Activated CD4-positive, alpha-beta memory T cell treated with anti-CD3 and anti-CD28 coated beads, Interleukin-2, amount 10 ng/mL, durations not matched to agents 7 days and 5 days (primary cell): ENCODE measurements at regions of chr1 and their contacts with region 1.

Region 1: DNA sequence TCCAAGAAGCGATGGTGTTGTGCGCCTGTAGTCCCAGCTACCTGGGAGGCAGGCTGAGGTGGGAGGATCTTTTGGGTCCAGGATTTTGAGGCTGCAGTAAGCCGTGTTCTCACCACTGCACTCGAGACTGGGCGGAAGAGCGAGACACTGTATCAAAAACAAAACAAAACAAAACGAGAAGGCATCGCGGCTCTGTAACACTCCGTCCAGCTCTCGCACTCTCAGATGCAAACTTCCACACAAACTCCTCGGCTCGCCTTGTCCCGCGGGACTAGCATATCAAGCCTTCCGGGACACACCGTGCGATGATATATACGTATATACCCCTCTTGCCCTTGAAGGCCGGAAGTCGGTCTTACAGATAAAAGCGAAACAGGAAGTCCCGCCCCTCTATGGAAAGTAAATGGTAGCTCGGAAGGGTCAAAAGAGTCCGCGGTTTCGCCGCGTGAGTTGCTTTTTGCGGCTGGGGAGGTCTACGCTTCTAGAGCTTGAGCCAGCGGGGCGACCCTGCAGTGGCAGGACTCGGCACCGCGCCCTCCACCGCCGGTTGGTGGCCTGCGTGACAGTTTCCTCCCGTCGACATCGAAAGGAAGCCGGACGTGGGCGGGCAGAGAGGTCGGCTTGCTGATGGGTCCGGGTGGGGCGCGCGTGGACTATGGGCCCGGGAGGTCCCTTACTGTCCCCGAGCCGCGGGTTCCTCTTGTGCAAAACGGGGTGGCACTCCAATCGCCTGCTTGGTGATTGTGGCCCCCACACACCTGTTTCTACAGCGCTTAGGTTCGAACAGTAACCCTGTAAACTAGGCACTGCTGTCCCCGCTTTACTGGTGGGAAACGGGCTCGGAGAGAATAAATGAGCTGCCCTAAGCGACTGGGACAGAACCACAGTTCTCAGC is at the start of gene COA6:
- DNase-seq: peak; percentile 89
- H3K4me3 Mint-ChIP-seq: peak within 1 kb of the TSS; percentile 96
- H3K27ac Mint-ChIP-seq: peak within 1 kb of the TSS; percentile 91
- H3K4me1 Mint-ChIP-seq: peaks cover 61% of the 10 kb centered on the region
- H3K27me3 Mint-ChIP-seq: no peaks in the 10 kb centered on the region
- total RNA-seq, gene COA6: 39.7 to 44.7 TPM

Region 2: DNA sequence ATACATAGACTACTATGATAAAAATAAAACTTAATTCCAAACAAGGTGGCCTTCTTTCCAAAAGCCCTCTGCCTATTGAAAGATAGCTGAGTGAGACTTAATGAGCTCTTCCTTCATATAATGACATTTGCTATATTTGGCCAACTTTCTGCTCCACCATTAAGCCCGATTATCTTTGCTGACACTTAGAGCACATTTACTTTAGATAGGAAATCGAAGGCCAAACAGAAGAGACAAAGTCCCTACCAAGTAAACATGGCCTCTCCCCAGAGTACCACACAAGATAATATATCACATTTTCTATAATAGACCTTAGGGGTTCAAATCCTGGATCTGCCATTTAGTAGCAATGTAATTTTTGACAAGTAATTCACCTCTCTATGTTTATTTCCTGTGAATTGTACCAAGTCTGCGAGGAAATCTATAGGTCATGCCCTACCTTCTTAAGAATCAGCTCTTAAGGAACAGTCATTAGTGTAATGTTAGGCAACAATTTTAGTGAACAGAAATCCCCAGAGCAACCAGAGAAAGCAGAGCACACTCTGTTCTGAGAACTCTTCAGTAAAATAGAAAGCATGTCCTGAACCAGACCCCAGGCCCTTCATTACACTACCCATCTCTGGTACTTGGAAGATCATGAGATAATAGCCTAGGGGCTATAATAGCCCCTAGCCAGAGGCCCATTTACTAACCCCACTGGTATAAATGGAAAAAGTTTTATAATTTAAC is 17.4 kb before region 1 on chr1:
- CTCF ChIA-PET with region 1: interaction called, 4 read pairs
- POLR2A ChIA-PET with region 1: interaction called, 34 read pairs
- DNase-seq: no peak
- H3K4me3 Mint-ChIP-seq: peak overlapping the region; percentile 81
- H3K27ac Mint-ChIP-seq: peak overlapping the region; percentile 70
- H3K4me1 Mint-ChIP-seq: peaks cover 19% of the 10 kb centered on the region
- H3K27me3 Mint-ChIP-seq: peaks cover 12% of the 10 kb centered on the region

Region 3: DNA sequence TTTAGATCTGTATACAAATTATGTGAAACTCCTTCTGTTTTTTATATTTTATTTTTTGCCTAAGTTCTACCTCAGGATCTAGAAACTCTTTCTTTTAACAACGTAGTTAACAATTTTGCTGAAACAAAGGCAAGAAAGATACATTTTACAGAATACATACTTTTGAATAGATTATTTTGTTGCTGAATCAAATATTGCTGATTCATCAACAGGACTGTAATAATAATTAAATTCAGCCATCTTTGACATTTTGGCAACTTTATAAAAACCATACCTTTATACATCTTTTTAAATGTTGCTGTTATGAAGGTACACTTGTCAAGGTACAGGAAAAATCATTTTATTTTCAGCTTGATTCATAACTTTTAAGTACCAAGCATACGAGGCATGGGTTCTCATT is 10.8 kb before region 1 on chr1:
- CTCF ChIA-PET with region 1: interaction called, 4 read pairs
- POLR2A ChIA-PET with region 1: interaction called, 34 read pairs
- DNase-seq: no peak
- H3K4me3 Mint-ChIP-seq: no peak overlapping the region
- H3K27ac Mint-ChIP-seq: no peak overlapping the region
- H3K4me1 Mint-ChIP-seq: peaks cover 14% of the 10 kb centered on the region
- H3K27me3 Mint-ChIP-seq: peaks cover 4% of the 10 kb centered on the region

Region 4: DNA sequence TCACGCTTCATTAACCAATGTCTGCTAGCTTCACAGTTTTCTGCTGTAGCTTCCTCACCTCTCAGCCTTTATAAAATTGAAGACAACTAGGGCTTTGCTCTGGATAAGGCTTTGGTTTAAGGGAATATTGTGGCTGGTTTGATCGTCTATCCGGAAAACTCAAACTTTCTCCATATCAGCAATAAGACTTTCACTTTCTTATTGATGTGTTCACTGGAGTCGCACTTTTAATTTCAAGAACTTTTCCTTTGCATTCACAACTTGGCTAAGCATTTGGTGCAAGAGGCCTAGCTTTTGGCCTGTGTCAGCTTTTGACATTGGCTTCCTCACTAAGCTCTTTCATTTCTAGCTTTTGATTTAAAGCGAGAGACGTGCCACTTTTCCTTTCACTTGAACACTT is 12.8 kb after region 1 on chr1:
- CTCF ChIA-PET with region 1: interaction called, 4 read pairs
- POLR2A ChIA-PET with region 1: interaction called, 10 read pairs
- DNase-seq: no peak
- H3K4me3 Mint-ChIP-seq: no peak overlapping the region
- H3K27ac Mint-ChIP-seq: no peak overlapping the region
- H3K4me1 Mint-ChIP-seq: peaks cover 12% of the 10 kb centered on the region
- H3K27me3 Mint-ChIP-seq: no peaks in the 10 kb centered on the region

Region 5: DNA sequence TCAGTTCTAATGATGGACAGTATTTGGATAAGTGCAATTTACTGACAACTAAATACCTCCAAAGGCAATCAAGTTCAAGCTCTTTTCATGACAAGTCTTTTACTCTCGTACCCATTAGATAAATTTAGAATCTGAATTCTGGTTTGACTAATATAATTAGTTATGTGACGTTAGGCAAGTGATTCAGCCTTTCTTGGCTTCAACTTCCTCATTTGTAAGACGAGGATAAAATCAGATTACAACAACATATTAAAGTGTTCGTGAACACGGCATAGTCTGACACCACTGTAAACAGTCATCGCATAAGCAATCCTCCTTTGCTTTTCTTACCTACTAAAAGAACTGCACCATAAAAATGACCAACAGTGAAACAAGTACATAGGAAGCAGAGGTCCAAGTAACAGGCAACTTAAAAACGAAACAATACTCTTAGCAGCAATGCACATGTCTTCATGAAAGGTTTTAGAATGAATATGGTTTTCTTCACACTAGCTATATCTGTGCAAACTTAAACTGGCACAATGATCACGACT is 25.6 kb after region 1 on chr1:
- CTCF ChIA-PET with region 1: interaction called, 8 read pairs
- POLR2A ChIA-PET with region 1: interaction called, 24 read pairs
- DNase-seq: no peak
- H3K4me3 Mint-ChIP-seq: peak overlapping the region; percentile 72
- H3K27ac Mint-ChIP-seq: peak overlapping the region; percentile 83
- H3K4me1 Mint-ChIP-seq: peaks cover 51% of the 10 kb centered on the region
- H3K27me3 Mint-ChIP-seq: no peaks in the 10 kb centered on the region

Region 6: GRCh38 chr1:234409328-234409727 is 36.0 kb after region 1 on chr1:
- CTCF ChIA-PET with region 1: interaction called, 4 read pairs
- POLR2A ChIA-PET with region 1: interaction called, 28 read pairs
- DNase-seq: peak; percentile 28
- H3K4me3 Mint-ChIP-seq: peak overlapping the region; percentile 60
- H3K27ac Mint-ChIP-seq: peak overlapping the region; percentile 84
- H3K4me1 Mint-ChIP-seq: peaks cover 22% of the 10 kb centered on the region
- H3K27me3 Mint-ChIP-seq: no peaks in the 10 kb centered on the region

Region 7: GRCh38 chr1:234478481-234479309 is 105.4 kb after region 1 on chr1 and contains the start of gene TARBP1:
- CTCF ChIA-PET with region 1: interaction called, 9 read pairs
- POLR2A ChIA-PET with region 1: interaction called, 21 read pairs
- DNase-seq: peak; percentile 76
- H3K4me3 Mint-ChIP-seq: peak within 1 kb of the TSS; percentile 78
- H3K27ac Mint-ChIP-seq: peak within 1 kb of the TSS; percentile 59
- H3K4me1 Mint-ChIP-seq: peaks cover 37% of the 10 kb centered on the region
- H3K27me3 Mint-ChIP-seq: peaks cover 10% of the 10 kb centered on the region
- total RNA-seq, gene TARBP1: 24.8 to 25.0 TPM